Sigmoid colon (tissue), 7 donors: ENCODE measurements at regions of chr19 and their contacts with region 1.

Region 1: GRCh38 chr19:58519355-58520256 is at the start of gene ZBTB45:
- DNase-seq: peak; percentile 97
- H3K4me3 ChIP-seq: peak within 1 kb of the TSS; percentile 74 to 75 (median 75)
- H3K27ac ChIP-seq: peak within 1 kb of the TSS; percentile 92 to 97 (median 96)
- H3K4me1 ChIP-seq: peaks cover 0 to 44% (median 40%) of the 10 kb centered on the region in 4 donors
- H3K27me3 ChIP-seq: no peaks in the 10 kb centered on the region
- CTCF ChIP-seq: peak; percentile 55 to 90 (median 75)
- EP300 ChIP-seq: peak in 1 of 4 donors; percentile 31
- POLR2A ChIP-seq: peak; percentile 48 to 65
- total RNA-seq, gene ZBTB45: 7.6 to 13.8 (median 8.4) TPM

Region 2: GRCh38 chr19:58434217-58434616 is 85.4 kb before region 1 on chr19:
- intact Hi-C with region 1: no loop called
- DNase-seq: no peak
- H3K4me3 ChIP-seq: no peak overlapping the region
- H3K27ac ChIP-seq: no peak overlapping the region
- H3K4me1 ChIP-seq: peaks cover 0 to 6% (median 4%) of the 10 kb centered on the region in 4 donors
- H3K27me3 ChIP-seq: no peaks in the 10 kb centered on the region
- CTCF ChIP-seq: no peak
- EP300 ChIP-seq: no peak
- POLR2A ChIP-seq: no peak

Region 3: GRCh38 chr19:58536852-58537798 is 17.5 kb after region 1 on chr19:
- intact Hi-C with region 1: no loop called
- DNase-seq: no peak
- H3K4me3 ChIP-seq: no peak overlapping the region
- H3K27ac ChIP-seq: no peak overlapping the region
- H3K4me1 ChIP-seq: peaks cover 0 to 8% (median 6%) of the 10 kb centered on the region in 4 donors
- H3K27me3 ChIP-seq: peaks cover 8 to 37% (median 21%) of the 10 kb centered on the region in 3 donors
- CTCF ChIP-seq: no peak
- EP300 ChIP-seq: no peak
- POLR2A ChIP-seq: no peak

Region 4: DNA sequence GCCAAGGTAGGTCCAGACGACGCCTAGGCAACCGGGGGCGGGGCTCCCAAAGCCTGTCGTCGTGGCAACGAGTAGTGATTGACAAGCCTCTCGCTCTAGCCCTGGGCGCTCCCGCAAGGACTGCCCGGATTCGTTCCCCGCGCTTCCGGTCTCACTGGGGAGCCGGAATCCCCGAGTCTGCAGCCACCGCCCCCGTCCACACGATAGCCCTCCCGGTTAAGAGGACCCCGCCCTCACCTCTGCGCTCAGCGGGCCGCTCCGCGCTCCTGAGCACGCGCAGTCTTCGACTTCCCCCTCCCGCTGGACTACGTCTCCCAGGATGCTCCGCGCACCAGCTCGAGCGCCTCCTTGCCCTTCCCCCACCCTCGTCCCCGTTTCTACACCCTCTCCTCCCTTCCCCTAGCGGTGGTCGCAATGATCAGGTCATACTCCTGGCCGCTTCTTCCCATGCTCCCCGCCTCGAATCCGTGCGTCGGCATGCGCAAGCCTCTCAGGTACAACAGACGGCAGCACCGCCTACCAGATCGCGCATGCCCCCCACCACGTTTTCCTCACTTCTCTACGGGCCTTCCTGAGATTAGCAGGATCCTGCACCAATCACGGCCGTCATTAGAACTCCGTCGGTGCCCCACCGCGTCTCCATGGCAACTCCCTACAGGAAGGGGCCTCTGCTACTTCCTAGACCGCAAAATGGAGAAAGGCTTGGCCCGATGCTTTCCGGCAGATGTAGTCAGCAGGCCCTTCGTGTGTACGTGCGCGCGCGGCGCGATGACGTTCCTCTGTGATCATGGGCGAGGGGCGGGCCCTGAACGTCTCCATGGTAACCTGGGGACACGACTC is 53.4 kb after region 1 on chr19 and contains the start of gene MZF1:
- intact Hi-C with region 1: loop called (anchors 1 kb)
- DNase-seq: peak; percentile 100
- H3K4me3 ChIP-seq: peak within 1 kb of the TSS; percentile 58 to 87 (median 70)
- H3K27ac ChIP-seq: peak within 1 kb of the TSS; percentile 92 to 99 (median 98)
- H3K4me1 ChIP-seq: peaks cover 0 to 46% (median 40%) of the 10 kb centered on the region in 4 donors
- H3K27me3 ChIP-seq: no peaks in the 10 kb centered on the region
- CTCF ChIP-seq: peak in 1 of 4 experiments; percentile 36
- EP300 ChIP-seq: peak in 1 of 4 donors; percentile 80
- POLR2A ChIP-seq: peak; percentile 6 to 44
- total RNA-seq, gene MZF1: 13.6 to 31.5 (median 20.1) TPM